ENCODE measurements at regions of chr16 and their contacts with region 1.

Region 1: GRCh38 chr16:30813821-30814189 is 26.8 kb upstream of the ZNF629 start:
- DNase-seq: no peak
- ATAC-seq: no peak
- H3K4me3 Mint-ChIP-seq: peak overlapping the region; percentile 94
- H3K27ac Mint-ChIP-seq: peak overlapping the region; percentile 88
- H3K4me1 Mint-ChIP-seq: peaks cover 12% of the 10 kb centered on the region
- H3K27me3 Mint-ChIP-seq: peaks cover 2% of the 10 kb centered on the region

Region 2: DNA sequence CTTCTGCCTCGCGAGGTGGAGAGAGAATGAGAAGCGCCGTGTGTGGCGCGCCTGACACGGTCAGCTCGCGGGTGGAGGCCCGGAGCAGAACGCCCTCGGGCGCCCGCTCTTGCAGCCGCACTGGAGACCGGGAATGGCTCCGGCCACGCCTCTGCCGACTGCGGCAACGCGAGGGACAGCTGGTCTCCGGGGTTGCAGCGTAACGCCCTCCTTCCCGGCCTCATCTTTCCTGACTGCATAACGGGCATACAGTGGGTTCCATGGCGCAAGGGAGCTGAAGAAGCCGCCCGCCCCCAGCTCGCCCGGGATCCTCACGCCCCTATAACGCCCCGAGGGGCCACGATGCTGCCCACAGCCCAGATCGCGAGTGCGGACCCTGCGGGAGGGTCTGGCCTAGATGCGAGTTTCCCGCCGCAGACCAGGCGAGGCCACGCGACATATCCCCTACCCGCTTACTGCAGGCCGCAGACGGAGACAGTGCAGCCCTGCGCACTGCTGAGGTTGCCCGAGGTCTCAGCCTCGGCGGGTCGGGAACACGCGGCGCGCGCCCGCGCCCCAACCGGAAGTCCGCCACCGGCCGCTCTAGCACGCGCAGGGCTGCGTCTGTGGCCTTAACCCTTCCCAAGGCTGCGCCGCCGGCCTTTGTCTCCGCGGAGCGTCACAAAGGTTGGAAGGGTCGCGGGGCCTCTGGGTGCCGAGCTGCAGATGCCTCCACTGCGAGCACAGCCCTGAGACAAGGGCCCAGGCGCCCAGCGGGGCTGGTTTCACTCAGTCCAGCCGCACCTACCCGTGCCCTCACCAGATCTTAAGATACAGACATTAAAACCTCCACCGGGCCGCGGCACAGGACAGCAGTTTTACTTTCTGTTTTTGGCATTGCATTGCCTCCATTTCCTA is 61.3 kb after region 1 on chr16:
- CTCF ChIA-PET with region 1: interaction called, 12 read pairs
- DNase-seq: peak; percentile 92
- ATAC-seq: peak; percentile 90
- H3K4me3 Mint-ChIP-seq: peak overlapping the region; percentile 82
- H3K27ac Mint-ChIP-seq: peak overlapping the region; percentile 93
- H3K4me1 Mint-ChIP-seq: peaks cover 37% of the 10 kb centered on the region
- H3K27me3 Mint-ChIP-seq: no peaks in the 10 kb centered on the region

Measured in activated CD8-positive, alpha-beta memory T cell treated with anti-CD3 and anti-CD28 coated beads, Interleukin-2, amount 10 ng/mL, durations not matched to agents 7 days and 5 days (primary cell).